Psoas muscle (tissue), 8 donors: ENCODE measurements at regions of chr13 and their contacts with region 1.

Region 1: GRCh38 chr13:38349390-38350113 is at the start of gene UFM1:
- DNase-seq: peak; percentile 90 to 94
- ATAC-seq: peak; percentile 95 to 100 (median 99)
- H3K4me3 ChIP-seq: peak within 1 kb of the TSS; percentile 90
- H3K27ac ChIP-seq: peak within 1 kb of the TSS; percentile 90
- H3K4me1 ChIP-seq: peaks cover 18% of the 10 kb centered on the region
- H3K27me3 ChIP-seq: no peaks in the 10 kb centered on the region
- CTCF ChIP-seq: no peak
- total RNA-seq, gene UFM1: 19.8 to 35.8 (median 25.8) TPM

Region 2: DNA sequence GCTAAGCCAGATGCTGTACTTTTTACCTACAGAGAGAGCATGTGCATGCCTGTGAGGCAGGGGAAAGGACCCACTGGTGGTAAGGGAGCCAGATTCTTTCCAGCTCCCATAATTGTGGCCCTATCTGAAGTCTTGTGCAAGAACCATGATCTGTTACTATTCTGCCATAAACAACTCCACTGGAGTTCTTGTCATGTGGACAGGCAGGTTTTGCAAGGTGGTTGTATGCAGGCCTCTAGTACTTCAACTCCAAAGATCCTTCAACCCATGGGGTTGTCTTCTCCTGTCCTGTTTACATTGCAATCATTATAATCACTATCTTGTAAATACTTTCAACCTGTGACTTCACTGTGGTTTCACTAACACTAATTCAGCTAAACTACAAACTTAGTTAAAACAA is 674.2 kb after region 1 on chr13:
- intact Hi-C with region 1: loop called in 1 of 2 experiments (anchors 10 kb)
- DNase-seq: no peak
- ATAC-seq: no peak
- H3K4me3 ChIP-seq: no peak overlapping the region
- H3K27ac ChIP-seq: no peak overlapping the region
- H3K4me1 ChIP-seq: peaks cover 4% of the 10 kb centered on the region
- H3K27me3 ChIP-seq: no peaks in the 10 kb centered on the region
- CTCF ChIP-seq: no peak